A549 (cell line): ENCODE measurements at regions of chr9 and their contacts with region 1.

Region 1: GRCh38 chr9:114505187-114506081 is at the start of gene WHRN:
- DNase-seq: peak; percentile 84 to 96
- ATAC-seq: peak; percentile 80 to 86
- H3K4me3 ChIP-seq: peak within 1 kb of the TSS; percentile 77
- H3K27ac ChIP-seq: peak within 1 kb of the TSS; percentile 65 to 88
- H3K4me1 ChIP-seq: peaks cover 27% of the 10 kb centered on the region
- CTCF ChIP-seq: no peak
- EP300 ChIP-seq: no peak
- POLR2A ChIP-seq: peak; percentile 47
- RAD21 ChIP-seq: 0 out of 5 replicates have a peak, but pooled peaks of 1 of the 2 experiments have one; percentile 10
- polyA plus RNA-seq, gene WHRN: 1.2 and 1.5 TPM in 2 replicates

Region 2: GRCh38 chr9:114420581-114420980 is 84.9 kb before region 1 on chr9:
- CTCF ChIA-PET with region 1: no interaction called
- POLR2A ChIA-PET with region 1: no interaction called
- DNase-seq: no peak
- ATAC-seq: no peak
- H3K4me3 ChIP-seq: no peak overlapping the region
- H3K27ac ChIP-seq: no peak overlapping the region
- H3K4me1 ChIP-seq: no peaks in the 10 kb centered on the region
- CTCF ChIP-seq: no peak
- EP300 ChIP-seq: no peak
- POLR2A ChIP-seq: no peak
- RAD21 ChIP-seq: no peak

Region 3: DNA sequence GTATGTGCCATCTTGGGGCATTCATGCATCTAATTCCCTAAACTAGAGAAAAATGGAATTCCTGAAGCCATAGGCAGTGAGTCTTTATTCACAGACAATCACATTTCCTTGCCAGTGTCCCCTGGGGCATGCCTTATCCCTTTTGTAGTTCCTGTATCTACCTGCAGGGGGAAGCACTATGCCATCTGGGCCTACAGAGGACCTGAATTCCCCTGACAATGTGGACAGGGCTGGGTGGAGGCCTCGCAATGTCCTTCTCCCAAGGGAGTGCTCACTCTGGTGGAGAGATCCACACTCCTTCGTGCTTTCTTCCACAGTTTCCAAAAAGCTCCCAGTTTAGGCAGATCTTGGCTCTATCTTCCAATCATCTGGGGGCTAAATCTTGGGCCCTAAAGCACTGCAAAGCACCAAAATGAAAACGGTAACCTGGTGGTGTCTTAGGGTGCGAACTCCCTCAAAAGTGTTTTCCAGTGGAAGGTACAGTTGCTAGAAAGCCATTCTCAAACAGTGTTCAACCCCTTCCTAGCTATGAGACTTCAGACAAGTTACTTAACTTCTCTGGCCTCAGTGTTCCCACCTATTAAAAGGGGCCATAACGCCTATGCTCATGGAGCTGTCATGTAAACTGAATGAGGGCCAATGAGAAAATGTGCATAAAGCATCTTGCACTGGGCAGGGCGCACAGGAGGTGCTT is 17.7 kb before region 1 on chr9:
- CTCF ChIA-PET with region 1: interaction called, 104 read pairs
- POLR2A ChIA-PET with region 1: interaction called, 3 read pairs
- DNase-seq: peak; percentile 74 to 79
- ATAC-seq: peak; percentile 92 to 98
- H3K4me3 ChIP-seq: no peak overlapping the region
- H3K27ac ChIP-seq: no peak overlapping the region
- H3K4me1 ChIP-seq: peaks cover 9% of the 10 kb centered on the region; the same call in 1 of the 3 replicates
- CTCF ChIP-seq: peak; percentile 77
- EP300 ChIP-seq: no peak
- POLR2A ChIP-seq: no peak
- RAD21 ChIP-seq: peak; percentile 84 to 87

Region 4: GRCh38 chr9:114518599-114519022 is 13.2 kb after region 1 on chr9:
- CTCF ChIA-PET with region 1: interaction called, 25 read pairs
- POLR2A ChIA-PET with region 1: no interaction called
- DNase-seq: no peak
- ATAC-seq: no peak
- H3K4me3 ChIP-seq: no peak overlapping the region
- H3K27ac ChIP-seq: no peak overlapping the region
- H3K4me1 ChIP-seq: 0 out of 3 replicates have a peak, but pooled peaks cover 4% of the 10 kb centered on the region
- CTCF ChIP-seq: no peak
- EP300 ChIP-seq: no peak
- POLR2A ChIP-seq: no peak
- RAD21 ChIP-seq: no peak

Region 5: DNA sequence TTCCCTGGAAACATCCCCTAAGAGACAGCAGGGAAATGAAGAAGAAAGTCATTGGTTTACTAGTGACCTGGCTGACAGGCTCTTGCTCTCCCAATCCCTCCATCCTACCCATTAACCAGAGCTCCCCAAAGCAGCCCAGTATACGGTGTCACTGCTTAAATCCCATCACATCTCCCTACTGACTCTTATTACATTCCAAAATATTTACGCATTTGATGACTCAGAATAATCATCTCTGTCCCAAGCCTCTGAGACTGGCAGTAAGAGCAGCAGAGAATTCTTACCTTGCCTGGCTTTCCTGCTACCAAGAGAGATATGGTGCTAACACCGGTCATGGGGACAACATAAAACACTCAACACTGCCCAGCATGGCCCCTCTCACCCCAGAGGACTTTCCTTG is 20.1 kb after region 1 on chr9:
- CTCF ChIA-PET with region 1: interaction called, 25 read pairs
- POLR2A ChIA-PET with region 1: no interaction called
- DNase-seq: peak; percentile 37 to 57
- ATAC-seq: peak; percentile 87 to 91
- H3K4me3 ChIP-seq: no peak overlapping the region
- H3K27ac ChIP-seq: peak overlapping the region in 1 of 2 experiments; percentile 37; a peak in 3 of 6 replicates
- H3K4me1 ChIP-seq: peaks cover 16% of the 10 kb centered on the region
- CTCF ChIP-seq: no peak
- EP300 ChIP-seq: no peak
- POLR2A ChIP-seq: no peak
- RAD21 ChIP-seq: no peak